ENCODE measurements at regions of chr15 and their contacts with region 1.

Region 1: GRCh38 chr15:29925227-29926082 is 103.2 kb upstream of the TJP1 start:
- DNase-seq: peak; percentile 79 to 93
- H3K4me3 ChIP-seq: no peak overlapping the region
- H3K27ac ChIP-seq: 0 out of 2 replicates have a peak overlapping the region, but pooled peaks have one; percentile 16
- H3K4me1 ChIP-seq: peaks cover 7 to 15% (median 10%) of the 10 kb centered on the region in 4 experiments
- H3K27me3 ChIP-seq: no peaks in the 10 kb centered on the region
- CTCF ChIP-seq: peak; percentile 97 to 99 (median 99)
- EP300 ChIP-seq: no peak
- POLR2A ChIP-seq: peak in 1 of 2 experiments; percentile 79; a peak in 2 of 3 replicates
- RAD21 ChIP-seq: peak; percentile 94 to 97

Region 2: DNA sequence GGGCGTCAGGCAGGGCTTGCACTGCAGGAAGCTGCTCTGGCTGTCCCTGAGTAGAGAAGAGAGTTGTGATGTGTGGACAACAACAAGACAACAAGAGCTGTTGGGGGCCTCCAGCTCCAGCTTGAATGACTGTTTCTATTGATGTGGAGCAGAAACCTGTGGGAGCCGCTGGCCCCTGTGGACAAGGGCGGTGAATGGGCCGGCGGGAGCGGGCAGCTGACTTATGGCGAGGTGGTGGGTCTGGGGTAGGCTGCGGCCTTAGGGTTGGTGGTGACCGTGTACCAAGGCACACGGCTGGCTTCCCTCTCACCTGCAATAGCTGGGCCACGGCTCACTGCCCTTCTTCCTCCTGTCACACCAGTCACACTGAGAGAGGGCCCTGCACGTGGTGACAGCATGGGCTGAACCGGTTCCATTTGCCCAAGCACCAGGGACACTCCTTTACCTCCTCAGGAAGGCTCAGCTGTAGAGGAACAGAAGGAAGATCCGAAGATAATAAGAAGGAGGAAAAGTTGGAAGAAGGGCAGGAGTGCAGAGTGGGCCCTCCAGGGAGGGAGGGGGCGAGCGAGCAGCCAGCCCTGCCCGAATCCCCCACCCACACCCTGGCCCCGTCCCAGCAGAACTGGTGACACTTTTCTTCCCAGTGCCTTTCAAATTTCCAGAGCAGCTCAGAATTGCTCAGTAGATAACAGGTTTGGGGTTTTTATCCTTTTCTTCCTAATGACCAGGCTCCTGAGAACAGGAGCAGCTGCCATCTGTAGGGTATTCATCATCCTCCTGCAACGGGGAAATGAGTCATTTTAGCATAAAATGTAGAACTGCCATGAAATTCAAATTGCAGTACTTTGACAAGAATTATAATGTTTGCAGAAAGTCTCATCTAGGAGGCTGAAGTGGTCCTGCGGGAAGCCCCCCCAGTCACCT is 240.0 kb before region 1 on chr15:
- CTCF ChIA-PET with region 1: interaction called, 10 read pairs
- POLR2A ChIA-PET with region 1: no interaction called
- DNase-seq: peak in 1 of 2 experiments; percentile 39
- H3K4me3 ChIP-seq: no peak overlapping the region
- H3K27ac ChIP-seq: no peak overlapping the region
- H3K4me1 ChIP-seq: no peaks in the 10 kb centered on the region
- H3K27me3 ChIP-seq: no peaks in the 10 kb centered on the region
- CTCF ChIP-seq: no peak
- EP300 ChIP-seq: no peak
- POLR2A ChIP-seq: no peak
- RAD21 ChIP-seq: no peak

Region 3: DNA sequence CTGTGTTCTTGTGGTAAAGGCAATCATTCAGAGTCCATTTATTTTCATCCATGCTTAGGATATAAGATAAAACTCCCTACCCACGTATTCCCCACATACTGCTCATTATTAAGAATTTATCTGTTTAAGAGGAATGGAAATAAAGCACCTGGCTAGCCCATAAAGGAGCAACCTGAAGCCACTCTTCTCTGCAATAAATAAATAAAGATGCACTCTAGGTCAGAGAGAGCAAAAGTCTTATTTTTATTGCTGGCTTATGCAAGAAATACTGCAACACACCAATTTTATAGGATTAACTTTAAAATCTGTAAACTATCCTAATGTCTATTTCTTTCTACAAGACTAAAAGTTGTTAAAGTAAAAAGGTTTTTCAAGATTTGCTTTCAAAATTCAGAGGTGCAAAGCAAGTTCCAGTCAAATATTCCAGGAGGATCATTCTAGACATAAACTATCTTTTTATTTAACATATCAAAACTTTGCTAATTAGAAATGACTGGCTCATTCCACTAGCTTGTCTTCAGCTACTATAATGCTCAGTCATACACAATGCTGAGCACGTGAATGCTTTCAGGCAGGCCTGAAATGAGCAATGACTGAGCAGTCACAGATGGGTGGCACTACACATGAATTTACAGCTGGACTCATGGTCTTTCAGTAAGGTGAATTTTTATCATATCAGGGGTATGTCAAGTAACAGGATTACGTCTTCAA is 110.3 kb before region 1 on chr15:
- CTCF ChIA-PET with region 1: interaction called, 12 read pairs
- POLR2A ChIA-PET with region 1: interaction called, 33 read pairs
- DNase-seq: no peak
- H3K4me3 ChIP-seq: no peak overlapping the region
- H3K27ac ChIP-seq: no peak overlapping the region
- H3K4me1 ChIP-seq: peaks cover 0 to 10% (median 3%) of the 10 kb centered on the region in 4 experiments; a peak in 5 of 7 replicates
- H3K27me3 ChIP-seq: no peaks in the 10 kb centered on the region
- CTCF ChIP-seq: no peak
- EP300 ChIP-seq: no peak
- POLR2A ChIP-seq: no peak
- RAD21 ChIP-seq: no peak

Region 4: GRCh38 chr15:29844284-29844913 is 81.1 kb before region 1 on chr15:
- CTCF ChIA-PET with region 1: interaction called, 17 read pairs
- POLR2A ChIA-PET with region 1: no interaction called
- DNase-seq: no peak
- H3K4me3 ChIP-seq: no peak overlapping the region
- H3K27ac ChIP-seq: no peak overlapping the region
- H3K4me1 ChIP-seq: peaks cover 0 to 4% (median 1%) of the 10 kb centered on the region in 4 experiments; a peak in 2 of 7 replicates
- H3K27me3 ChIP-seq: no peaks in the 10 kb centered on the region
- CTCF ChIP-seq: no peak
- EP300 ChIP-seq: no peak
- POLR2A ChIP-seq: no peak
- RAD21 ChIP-seq: no peak

Region 5: GRCh38 chr15:29880341-29880740 is 45.1 kb before region 1 on chr15:
- CTCF ChIA-PET with region 1: interaction called, 28 read pairs
- POLR2A ChIA-PET with region 1: interaction called, 4 read pairs
- DNase-seq: no peak
- H3K4me3 ChIP-seq: no peak overlapping the region
- H3K27ac ChIP-seq: no peak overlapping the region
- H3K4me1 ChIP-seq: peaks cover 0 to 3% (median 0%) of the 10 kb centered on the region in 4 experiments; a peak in 1 of 7 replicates
- H3K27me3 ChIP-seq: no peaks in the 10 kb centered on the region
- CTCF ChIP-seq: no peak
- EP300 ChIP-seq: no peak
- POLR2A ChIP-seq: no peak
- RAD21 ChIP-seq: no peak

Region 6: DNA sequence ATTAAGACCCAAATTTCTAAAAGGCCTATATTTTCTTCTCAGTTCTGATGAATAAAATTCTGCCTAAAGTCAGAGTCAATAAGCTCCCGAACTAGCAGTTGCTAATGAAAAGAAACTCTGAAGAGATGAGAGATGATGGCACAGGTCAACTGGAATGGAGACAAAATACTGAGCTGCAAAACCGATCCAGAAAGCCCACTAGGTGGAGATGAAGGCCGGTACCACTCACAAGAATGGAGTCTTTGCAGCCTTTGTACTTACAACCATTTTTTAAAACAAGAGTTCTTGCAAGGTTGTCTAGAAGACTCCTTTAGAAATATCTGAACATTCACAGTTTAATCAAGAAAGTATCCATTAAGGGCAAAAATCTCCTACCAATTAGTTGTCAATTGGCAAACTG is 16.7 kb after region 1 on chr15:
- CTCF ChIA-PET with region 1: interaction called, 25 read pairs
- POLR2A ChIA-PET with region 1: interaction called, 3 read pairs
- DNase-seq: no peak
- H3K4me3 ChIP-seq: no peak overlapping the region
- H3K27ac ChIP-seq: no peak overlapping the region
- H3K4me1 ChIP-seq: no peaks in the 10 kb centered on the region
- H3K27me3 ChIP-seq: no peaks in the 10 kb centered on the region
- CTCF ChIP-seq: peak in 2 of 3 experiments; percentile 53 to 56; a peak in 3 of 4 replicates
- EP300 ChIP-seq: no peak
- POLR2A ChIP-seq: no peak
- RAD21 ChIP-seq: peak; percentile 64 to 72

Region 7: GRCh38 chr15:29968890-29969561 is 43.6 kb after region 1 on chr15:
- CTCF ChIA-PET with region 1: no interaction called
- POLR2A ChIA-PET with region 1: no interaction called
- DNase-seq: no peak
- H3K4me3 ChIP-seq: peak overlapping the region in 3 of 4 experiments; percentile 38 to 65 (median 42); a peak in 6 of 8 replicates
- H3K27ac ChIP-seq: no peak overlapping the region
- H3K4me1 ChIP-seq: peaks cover 0 to 6% (median under 1%) of the 10 kb centered on the region in 4 experiments; a peak in 2 of 7 replicates
- H3K27me3 ChIP-seq: peaks cover 16 to 34% (median 26%) of the 10 kb centered on the region in 4 experiments
- CTCF ChIP-seq: no peak
- EP300 ChIP-seq: no peak
- POLR2A ChIP-seq: no peak
- RAD21 ChIP-seq: no peak

Region 8: DNA sequence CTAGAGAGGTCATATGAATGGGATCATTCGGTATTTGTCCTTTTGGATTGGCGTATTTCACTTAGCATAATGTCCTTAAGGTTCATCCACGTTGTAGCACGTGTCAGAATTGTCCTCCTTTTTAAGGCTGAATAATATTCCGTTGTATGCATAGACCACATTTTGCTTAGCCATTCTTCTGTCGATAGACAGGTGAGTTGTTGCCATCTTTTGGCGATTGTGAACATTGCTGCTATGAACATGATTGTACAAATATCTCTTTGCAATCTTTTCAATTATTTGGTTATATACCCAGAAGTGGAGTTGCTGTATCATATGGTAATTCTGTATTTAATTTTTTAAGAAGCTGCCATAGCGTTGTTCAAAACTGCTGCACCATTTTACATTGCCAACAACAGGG is 104.9 kb after region 1 on chr15:
- CTCF ChIA-PET with region 1: no interaction called
- POLR2A ChIA-PET with region 1: no interaction called
- DNase-seq: no peak
- H3K4me3 ChIP-seq: no peak overlapping the region
- H3K27ac ChIP-seq: no peak overlapping the region
- H3K4me1 ChIP-seq: no peaks in the 10 kb centered on the region
- H3K27me3 ChIP-seq: no peaks in the 10 kb centered on the region
- CTCF ChIP-seq: peak in 1 of 3 experiments; percentile 16; a peak in 2 of 4 replicates
- EP300 ChIP-seq: no peak
- POLR2A ChIP-seq: no peak
- RAD21 ChIP-seq: peak; percentile 40 to 42; a peak in 3 of 4 replicates

Region 9: GRCh38 chr15:30073915-30074314 is 148.5 kb after region 1 on chr15:
- CTCF ChIA-PET with region 1: interaction called, 17 read pairs
- POLR2A ChIA-PET with region 1: no interaction called
- DNase-seq: no peak
- H3K4me3 ChIP-seq: no peak overlapping the region
- H3K27ac ChIP-seq: no peak overlapping the region
- H3K4me1 ChIP-seq: peaks cover 0 to 1% (median 0%) of the 10 kb centered on the region in 4 experiments; a peak in 2 of 7 replicates
- H3K27me3 ChIP-seq: no peaks in the 10 kb centered on the region
- CTCF ChIP-seq: no peak
- EP300 ChIP-seq: no peak
- POLR2A ChIP-seq: no peak
- RAD21 ChIP-seq: no peak

Measured in H1 (cell line).